CD14-positive monocyte (primary cell): ENCODE measurements at regions of chr22 and their contacts with region 1.

Region 1: GRCh38 chr22:33747576-33748180 is 172.6 kb downstream of the LARGE1 start:
- DNase-seq: no peak
- H3K4me3 ChIP-seq: no peak overlapping the region
- H3K4me3 Mint-ChIP-seq: no peak overlapping the region
- H3K27ac ChIP-seq: no peak overlapping the region
- H3K27ac Mint-ChIP-seq: no peak overlapping the region
- H3K4me1 ChIP-seq: no peaks in the 10 kb centered on the region
- H3K4me1 Mint-ChIP-seq: no peaks in the 10 kb centered on the region
- H3K27me3 ChIP-seq: no peaks in the 10 kb centered on the region
- H3K27me3 Mint-ChIP-seq: peaks cover 0 to 2% (median 0%) of the 10 kb centered on the region in 3 donors
- CTCF ChIP-seq: no peak

Region 2: DNA sequence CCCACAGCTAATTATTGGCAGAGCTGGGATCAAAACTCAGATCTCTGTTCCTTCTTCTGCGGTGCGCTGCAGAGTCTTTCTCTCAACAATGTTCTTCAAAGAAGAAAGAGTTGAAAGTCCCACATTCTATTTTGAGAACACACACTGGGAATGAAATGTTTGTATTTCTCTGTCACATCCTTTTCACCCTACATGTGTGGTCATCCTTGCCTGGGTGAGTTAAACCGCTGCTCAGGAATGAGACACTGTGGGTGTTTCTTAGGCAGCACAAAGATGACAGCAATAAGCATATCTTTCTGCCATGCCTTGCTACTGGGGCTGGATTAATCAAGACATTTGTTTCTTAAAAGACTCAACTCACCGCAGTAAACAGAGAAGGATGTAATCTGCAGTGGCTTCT is 50.0 kb before region 1 on chr22:
- intact Hi-C with region 1: loop called in 1 of 2 experiments (anchors 10 kb)
- DNase-seq: no peak
- H3K4me3 ChIP-seq: no peak overlapping the region
- H3K4me3 Mint-ChIP-seq: no peak overlapping the region
- H3K27ac ChIP-seq: no peak overlapping the region
- H3K27ac Mint-ChIP-seq: no peak overlapping the region
- H3K4me1 ChIP-seq: no peaks in the 10 kb centered on the region
- H3K4me1 Mint-ChIP-seq: no peaks in the 10 kb centered on the region
- H3K27me3 ChIP-seq: no peaks in the 10 kb centered on the region
- H3K27me3 Mint-ChIP-seq: peaks cover 0 to 2% (median 0%) of the 10 kb centered on the region in 3 donors
- CTCF ChIP-seq: no peak

Region 3: DNA sequence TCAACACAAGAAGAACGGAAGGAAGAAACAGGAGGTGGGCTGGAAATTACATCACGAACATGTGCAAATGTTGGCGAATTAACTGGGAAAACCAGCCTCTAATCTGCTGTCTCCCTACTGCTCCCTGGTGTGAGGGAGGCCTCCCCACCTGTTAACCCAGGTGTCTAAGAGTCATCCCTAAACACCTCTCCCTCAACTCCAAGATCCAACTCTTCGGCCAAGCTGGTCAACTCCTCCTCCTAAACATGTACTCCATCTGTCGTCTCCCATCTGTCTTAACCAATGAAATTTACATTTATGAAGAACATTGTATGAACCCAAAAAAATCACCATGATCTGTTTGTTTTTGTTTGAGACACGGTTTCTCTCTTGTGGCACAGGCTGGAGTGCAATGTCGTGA is 18.4 kb after region 1 on chr22:
- intact Hi-C with region 1: no loop called
- DNase-seq: no peak
- H3K4me3 ChIP-seq: no peak overlapping the region
- H3K4me3 Mint-ChIP-seq: no peak overlapping the region
- H3K27ac ChIP-seq: no peak overlapping the region
- H3K27ac Mint-ChIP-seq: no peak overlapping the region
- H3K4me1 ChIP-seq: no peaks in the 10 kb centered on the region
- H3K4me1 Mint-ChIP-seq: no peaks in the 10 kb centered on the region
- H3K27me3 ChIP-seq: no peaks in the 10 kb centered on the region
- H3K27me3 Mint-ChIP-seq: peaks cover 0 to 2% (median 0%) of the 10 kb centered on the region in 3 donors
- CTCF ChIP-seq: no peak